ENCODE measurements at regions of chr9 and their contacts with region 1.

Region 1: DNA sequence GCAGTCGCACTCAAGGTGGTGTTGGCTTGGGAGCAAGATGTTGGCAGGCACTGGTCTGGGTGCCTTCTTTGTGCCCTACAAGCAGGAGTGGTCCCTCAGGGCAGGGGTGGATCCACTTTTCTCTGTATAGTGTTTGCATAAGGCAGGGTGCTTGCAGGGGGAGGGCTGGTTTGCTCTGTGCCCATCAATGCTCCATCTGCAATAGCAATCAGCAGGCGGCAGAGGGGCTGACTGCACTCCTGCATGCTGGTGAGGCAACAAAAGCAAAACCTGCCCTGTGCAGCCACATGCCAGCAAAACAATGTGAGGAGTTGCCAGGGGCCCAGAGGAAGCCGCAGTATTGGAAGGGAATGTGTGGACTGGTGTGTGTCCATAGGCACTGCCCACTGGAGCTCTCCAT is 191.2 kb upstream of the CDKN2B start:
- DNase-seq: no peak
- ATAC-seq: no peak
- H3K4me3 Mint-ChIP-seq: no peak overlapping the region
- H3K27ac Mint-ChIP-seq: no peak overlapping the region
- H3K4me1 Mint-ChIP-seq: peaks cover 66% of the 10 kb centered on the region
- H3K27me3 Mint-ChIP-seq: no peaks in the 10 kb centered on the region
- CTCF ChIP-seq: no peak

Region 2: DNA sequence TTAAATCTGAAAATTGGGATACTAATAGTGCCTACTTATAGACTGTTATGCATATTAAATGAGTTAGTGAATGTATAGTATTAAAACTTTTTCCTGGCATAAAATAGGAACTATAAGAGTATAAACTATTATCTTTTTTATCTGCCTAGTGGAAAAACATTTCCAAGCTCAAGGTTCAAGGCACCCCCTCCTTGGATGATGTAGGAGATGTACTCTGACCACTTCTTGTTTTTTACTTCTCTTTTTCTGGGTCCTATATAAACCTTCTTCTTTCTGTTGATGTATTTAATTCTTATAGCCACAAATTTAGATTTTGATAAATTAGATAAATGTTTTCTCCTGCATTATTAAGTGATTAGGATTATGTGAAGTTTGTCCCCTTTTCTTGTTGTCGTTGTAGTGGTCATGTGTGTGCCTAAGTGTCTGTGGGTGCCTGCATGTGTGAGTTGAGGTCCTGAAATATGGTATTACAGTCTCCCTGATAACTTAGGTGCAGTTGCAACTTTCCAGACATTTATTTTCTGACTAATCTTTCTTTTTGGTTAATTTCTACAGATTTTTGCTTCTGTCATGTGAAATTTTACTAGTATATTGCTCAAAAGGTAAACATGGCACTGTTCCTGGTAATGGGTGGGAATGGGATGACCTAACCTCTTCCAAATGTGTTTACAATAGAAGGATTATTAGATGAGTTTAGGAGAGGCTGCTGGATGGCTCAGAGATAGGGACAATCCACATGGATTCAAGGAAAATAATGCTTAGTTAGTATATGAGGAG is 30.4 kb before region 1 on chr9:
- CTCF ChIA-PET with region 1: no interaction called
- POLR2A ChIA-PET with region 1: no interaction called
- intact Hi-C with region 1: loop called (anchors 1 kb)
- DNase-seq: no peak
- ATAC-seq: peak; percentile 47
- H3K4me3 Mint-ChIP-seq: peak overlapping the region; percentile 0
- H3K27ac Mint-ChIP-seq: peak overlapping the region; percentile 81
- H3K4me1 Mint-ChIP-seq: peaks cover 58% of the 10 kb centered on the region
- H3K27me3 Mint-ChIP-seq: no peaks in the 10 kb centered on the region
- CTCF ChIP-seq: no peak

Region 3: GRCh38 chr9:22175972-22176545 is 24.3 kb before region 1 on chr9:
- CTCF ChIA-PET with region 1: no interaction called
- POLR2A ChIA-PET with region 1: no interaction called
- intact Hi-C with region 1: loop called (anchors 1 kb)
- DNase-seq: no peak
- ATAC-seq: no peak
- H3K4me3 Mint-ChIP-seq: no peak overlapping the region
- H3K27ac Mint-ChIP-seq: no peak overlapping the region
- H3K4me1 Mint-ChIP-seq: peaks cover 52% of the 10 kb centered on the region
- H3K27me3 Mint-ChIP-seq: no peaks in the 10 kb centered on the region
- CTCF ChIP-seq: no peak

Region 4: DNA sequence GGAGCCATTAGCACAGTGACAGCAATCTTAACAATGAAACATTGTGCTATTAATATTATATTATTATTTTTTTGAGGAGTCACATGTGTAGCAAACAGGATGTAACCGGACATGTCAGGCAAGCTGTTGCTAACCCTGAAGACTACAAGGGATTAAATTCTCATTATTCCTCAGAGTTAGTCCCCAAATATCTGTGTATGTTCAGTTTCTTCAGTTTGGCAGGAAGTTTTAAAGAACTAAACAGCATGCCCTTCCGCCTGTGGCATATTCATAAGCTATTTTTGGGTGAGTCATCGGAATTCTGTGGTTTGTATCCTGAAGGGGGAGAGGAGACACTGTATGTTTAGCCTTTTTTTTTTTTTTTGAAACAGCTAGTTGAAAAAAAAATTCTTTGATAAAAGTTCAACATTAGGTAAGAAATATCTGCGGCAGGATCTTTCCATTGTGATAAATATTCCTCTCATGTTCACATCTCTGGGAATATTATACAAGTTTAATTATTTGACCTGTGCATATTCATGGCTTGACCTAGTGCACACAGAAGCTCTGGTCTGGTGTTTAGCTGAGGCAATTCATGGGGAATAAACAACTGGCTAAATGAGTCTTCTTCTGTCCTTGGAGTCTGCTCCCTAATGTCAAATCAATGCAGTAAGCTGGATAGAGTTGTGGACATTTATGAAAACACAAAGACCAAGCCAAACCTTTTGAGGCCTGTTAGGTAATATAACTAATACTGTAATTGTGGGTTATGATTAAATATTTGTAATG is 11.5 kb after region 1 on chr9:
- CTCF ChIA-PET with region 1: no interaction called
- POLR2A ChIA-PET with region 1: no interaction called
- intact Hi-C with region 1: loop called (anchors 2 kb)
- DNase-seq: no peak
- ATAC-seq: no peak
- H3K4me3 Mint-ChIP-seq: no peak overlapping the region
- H3K27ac Mint-ChIP-seq: no peak overlapping the region
- H3K4me1 Mint-ChIP-seq: peaks cover 33% of the 10 kb centered on the region
- H3K27me3 Mint-ChIP-seq: no peaks in the 10 kb centered on the region
- CTCF ChIP-seq: no peak

Region 5: GRCh38 chr9:22316645-22317044 is 116.3 kb after region 1 on chr9:
- CTCF ChIA-PET with region 1: no interaction called
- POLR2A ChIA-PET with region 1: no interaction called
- intact Hi-C with region 1: no loop called
- DNase-seq: no peak
- ATAC-seq: no peak
- H3K4me3 Mint-ChIP-seq: no peak overlapping the region
- H3K27ac Mint-ChIP-seq: no peak overlapping the region
- H3K4me1 Mint-ChIP-seq: no peaks in the 10 kb centered on the region
- H3K27me3 Mint-ChIP-seq: peaks cover 4% of the 10 kb centered on the region
- CTCF ChIP-seq: no peak

Measured in activated B cell treated with CpG ODN at 0.5 μM for 24 hours (primary cell).